Activated CD8-positive, alpha-beta T cell treated with anti-CD3 and anti-CD28 coated beads, Interleukin-2, amount 10 ng/mL, durations not matched to agents 7 days and 5 days (primary cell): ENCODE measurements at regions of chr7 and their contacts with region 1.

Region 1: GRCh38 chr7:92833024-92833765 is 3.2 kb downstream of the CDK6 start:
- DNase-seq: peak; percentile 93
- ATAC-seq: peak; percentile 75
- H3K4me3 Mint-ChIP-seq: peak overlapping the region; percentile 88
- H3K27ac Mint-ChIP-seq: peak overlapping the region; percentile 86
- H3K4me1 Mint-ChIP-seq: peaks cover 41% of the 10 kb centered on the region
- H3K27me3 Mint-ChIP-seq: peaks cover 7% of the 10 kb centered on the region

Region 2: DNA sequence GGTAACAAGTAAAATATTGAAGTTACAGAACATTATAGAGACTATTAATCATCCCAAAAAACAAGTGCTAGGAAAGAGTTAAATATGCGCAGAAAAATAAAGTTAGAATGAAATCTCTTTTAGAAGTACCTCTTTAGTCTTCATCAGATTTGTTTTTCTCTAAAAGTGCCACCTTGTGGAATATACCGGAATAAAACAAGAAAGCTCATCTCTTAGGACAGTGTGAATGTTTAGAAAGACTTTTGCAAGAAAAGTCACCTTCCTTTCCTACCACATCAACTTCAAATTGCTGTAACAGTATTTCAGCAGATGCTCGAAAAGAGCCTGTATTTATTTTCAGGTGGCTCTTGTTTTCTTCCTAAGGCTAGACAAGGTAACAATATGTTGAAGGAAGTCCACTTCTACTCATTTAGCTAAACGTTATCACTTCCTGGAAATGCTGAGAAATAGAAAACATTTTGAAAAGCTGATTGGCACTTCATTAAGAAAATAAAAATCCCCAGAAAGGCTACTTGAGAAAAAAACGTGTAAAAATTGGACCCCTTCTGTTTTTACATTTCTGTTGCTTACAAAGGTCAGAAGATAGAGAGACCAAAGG is 223.2 kb before region 1 on chr7:
- CTCF ChIA-PET with region 1: interaction called, 10 read pairs
- POLR2A ChIA-PET with region 1: interaction called, 6 read pairs
- DNase-seq: no peak
- ATAC-seq: peak; percentile 47
- H3K4me3 Mint-ChIP-seq: no peak overlapping the region
- H3K27ac Mint-ChIP-seq: peak overlapping the region; percentile 33
- H3K4me1 Mint-ChIP-seq: peaks cover 17% of the 10 kb centered on the region
- H3K27me3 Mint-ChIP-seq: no peaks in the 10 kb centered on the region

Region 3: DNA sequence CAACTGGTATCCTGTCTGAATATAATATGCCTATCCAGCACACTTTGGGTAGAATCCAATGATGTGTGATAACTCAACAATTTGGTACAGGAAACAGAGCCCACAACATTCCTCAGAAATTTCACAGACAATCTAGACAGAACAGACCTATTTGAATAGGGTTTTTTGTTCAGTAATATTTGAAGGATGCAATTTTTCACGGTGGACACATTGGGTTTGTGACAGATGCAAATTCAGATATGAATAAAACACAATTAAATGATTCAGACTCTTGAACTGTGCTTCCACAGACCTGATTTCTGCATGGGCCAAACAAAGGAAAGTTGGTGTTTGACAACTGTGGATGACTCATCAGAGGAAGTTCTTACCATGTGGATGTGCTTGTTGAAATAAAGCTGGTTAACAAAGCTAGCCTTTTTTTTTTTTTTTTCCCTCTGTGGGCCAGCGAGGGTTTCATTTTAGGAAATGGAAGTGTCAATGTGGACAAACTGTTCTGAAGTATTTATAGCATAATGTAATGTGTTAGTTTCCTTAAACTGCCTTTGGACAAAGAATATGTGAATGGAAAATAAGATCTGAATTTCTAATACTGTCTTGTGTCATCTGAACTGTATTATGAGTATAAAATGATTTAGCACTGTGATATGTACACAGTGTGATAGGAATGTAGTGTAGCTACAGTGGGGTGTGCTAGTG is 199.8 kb before region 1 on chr7:
- CTCF ChIA-PET with region 1: interaction called, 11 read pairs
- POLR2A ChIA-PET with region 1: interaction called, 4 read pairs
- DNase-seq: peak; percentile 45
- ATAC-seq: peak; percentile 76
- H3K4me3 Mint-ChIP-seq: peak overlapping the region; percentile 49
- H3K27ac Mint-ChIP-seq: peak overlapping the region; percentile 84
- H3K4me1 Mint-ChIP-seq: peaks cover 72% of the 10 kb centered on the region
- H3K27me3 Mint-ChIP-seq: no peaks in the 10 kb centered on the region

Region 4: GRCh38 chr7:92691578-92691977 is 141.6 kb before region 1 on chr7:
- CTCF ChIA-PET with region 1: interaction called, 38 read pairs
- POLR2A ChIA-PET with region 1: interaction called, 10 read pairs
- DNase-seq: peak; percentile 57
- ATAC-seq: peak; percentile 88
- H3K4me3 Mint-ChIP-seq: no peak overlapping the region
- H3K27ac Mint-ChIP-seq: peak overlapping the region; percentile 51
- H3K4me1 Mint-ChIP-seq: peaks cover 64% of the 10 kb centered on the region
- H3K27me3 Mint-ChIP-seq: no peaks in the 10 kb centered on the region

Region 5: GRCh38 chr7:92815412-92815811 is 17.8 kb before region 1 on chr7:
- CTCF ChIA-PET with region 1: interaction called, 150 read pairs
- POLR2A ChIA-PET with region 1: interaction called, 12 read pairs
- DNase-seq: no peak
- ATAC-seq: peak; percentile 58
- H3K4me3 Mint-ChIP-seq: no peak overlapping the region
- H3K27ac Mint-ChIP-seq: peak overlapping the region; percentile 48
- H3K4me1 Mint-ChIP-seq: peaks cover 79% of the 10 kb centered on the region
- H3K27me3 Mint-ChIP-seq: no peaks in the 10 kb centered on the region